Activated T-helper 2 cell treated with anti-CD3 and anti-CD28 coated beads, Interferon-gamma antibody, Interleukin-2, Interleukin-4, amounts not matched to agents 10 μg/mL and 5 μg/mL and 100 μg/mL, durations not matched to agents 14 hours and 24 hours and 36 hours (primary cell): ENCODE measurements at regions of chr6 and their contacts with region 1.

Region 1: GRCh38 chr6:125153391-125154117 is at the start of gene TPD52L1:
- DNase-seq: peak; percentile 37
- H3K4me3 Mint-ChIP-seq: peak within 1 kb of the TSS; percentile 52
- H3K27ac Mint-ChIP-seq: no peak within 1 kb of the TSS
- H3K4me1 Mint-ChIP-seq: peaks cover 3% of the 10 kb centered on the region
- H3K27me3 Mint-ChIP-seq: peaks cover 49% of the 10 kb centered on the region
- total RNA-seq, gene TPD52L1: not detected in 2 replicates

Region 2: DNA sequence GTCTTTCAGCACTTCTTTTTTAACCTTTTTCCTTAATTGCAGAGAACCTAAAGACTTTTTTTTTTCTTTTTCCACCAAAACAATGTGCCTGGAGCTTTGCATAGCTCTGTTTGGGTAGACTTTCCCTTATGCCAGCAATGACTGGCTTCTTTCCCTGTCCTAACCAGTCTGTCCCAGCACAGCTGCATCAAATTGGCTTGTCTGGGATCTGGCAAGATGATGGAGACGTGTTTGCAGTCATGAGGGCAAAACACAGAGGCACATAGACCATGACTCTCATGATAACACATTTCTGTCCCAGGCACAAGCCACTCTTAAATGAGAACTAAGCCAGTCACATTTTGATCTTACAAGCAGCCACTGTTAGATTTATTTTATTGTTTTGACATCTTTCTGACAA is 612.4 kb after region 1 on chr6:
- intact Hi-C with region 1: loop called (anchors 5 kb)
- DNase-seq: no peak
- H3K4me3 Mint-ChIP-seq: no peak overlapping the region
- H3K27ac Mint-ChIP-seq: no peak overlapping the region
- H3K4me1 Mint-ChIP-seq: peaks cover 4% of the 10 kb centered on the region
- H3K27me3 Mint-ChIP-seq: peaks cover 50% of the 10 kb centered on the region